Dendritic cell treated with granulocyte-macrophage colony-stimulating factor and Interleukin-4, amounts not matched to agents 40 ng/mL and 50 ng/mL, for 4 days (primary cell): ENCODE measurements at regions of chr9 and their contacts with region 1.

Region 1: DNA sequence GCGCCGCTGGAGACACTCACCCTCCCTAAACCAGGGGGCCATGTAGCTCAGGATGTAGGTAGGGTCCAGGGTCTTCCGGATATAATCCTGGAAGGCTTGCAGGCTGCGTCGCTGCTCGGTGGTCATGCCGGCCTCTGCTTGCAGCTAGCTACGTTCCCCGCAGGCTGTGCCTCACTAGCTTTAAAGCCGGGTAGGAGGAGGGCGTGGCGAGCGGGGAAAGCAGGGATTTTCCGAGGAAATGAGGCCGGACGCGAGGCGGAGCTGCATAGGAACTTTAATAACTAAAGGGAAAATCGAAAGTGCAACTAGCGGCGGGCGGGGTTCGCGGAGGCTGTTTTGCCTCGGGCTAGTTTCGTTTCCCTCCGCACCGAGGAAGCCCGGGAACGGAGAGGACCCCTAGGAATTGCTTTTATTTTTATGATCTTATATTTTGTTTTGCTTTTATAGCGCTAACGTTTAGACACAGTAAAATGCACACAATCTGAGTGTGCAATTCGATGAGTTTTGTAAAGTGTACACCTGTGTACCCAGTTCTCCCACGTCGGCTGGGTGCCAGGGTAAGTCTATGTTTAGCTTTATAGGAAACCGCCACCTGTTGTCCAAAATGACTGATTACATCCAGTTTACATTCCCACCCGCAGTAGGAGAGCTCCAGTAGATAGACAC is at the start of gene RIGI:
- H3K4me3 Mint-ChIP-seq: peak within 1 kb of the TSS; percentile 78
- H3K27ac Mint-ChIP-seq: peak within 1 kb of the TSS; percentile 90
- H3K4me1 Mint-ChIP-seq: peaks cover 25% of the 10 kb centered on the region
- H3K27me3 Mint-ChIP-seq: no peaks in the 10 kb centered on the region

Region 2: GRCh38 chr9:32384364-32385151 is 141.6 kb before region 1 on chr9 and contains the start of gene ACO1:
- intact Hi-C with region 1: loop called (anchors 1 kb)
- H3K4me3 Mint-ChIP-seq: peak within 1 kb of the TSS; percentile 87
- H3K27ac Mint-ChIP-seq: peak within 1 kb of the TSS; percentile 80
- H3K4me1 Mint-ChIP-seq: peaks cover 26% of the 10 kb centered on the region
- H3K27me3 Mint-ChIP-seq: peaks cover 26% of the 10 kb centered on the region

Region 3: GRCh38 chr9:32442433-32442832 is 83.7 kb before region 1 on chr9:
- intact Hi-C with region 1: no loop called
- H3K4me3 Mint-ChIP-seq: no peak overlapping the region
- H3K27ac Mint-ChIP-seq: no peak overlapping the region
- H3K4me1 Mint-ChIP-seq: no peaks in the 10 kb centered on the region
- H3K27me3 Mint-ChIP-seq: no peaks in the 10 kb centered on the region

Region 4: DNA sequence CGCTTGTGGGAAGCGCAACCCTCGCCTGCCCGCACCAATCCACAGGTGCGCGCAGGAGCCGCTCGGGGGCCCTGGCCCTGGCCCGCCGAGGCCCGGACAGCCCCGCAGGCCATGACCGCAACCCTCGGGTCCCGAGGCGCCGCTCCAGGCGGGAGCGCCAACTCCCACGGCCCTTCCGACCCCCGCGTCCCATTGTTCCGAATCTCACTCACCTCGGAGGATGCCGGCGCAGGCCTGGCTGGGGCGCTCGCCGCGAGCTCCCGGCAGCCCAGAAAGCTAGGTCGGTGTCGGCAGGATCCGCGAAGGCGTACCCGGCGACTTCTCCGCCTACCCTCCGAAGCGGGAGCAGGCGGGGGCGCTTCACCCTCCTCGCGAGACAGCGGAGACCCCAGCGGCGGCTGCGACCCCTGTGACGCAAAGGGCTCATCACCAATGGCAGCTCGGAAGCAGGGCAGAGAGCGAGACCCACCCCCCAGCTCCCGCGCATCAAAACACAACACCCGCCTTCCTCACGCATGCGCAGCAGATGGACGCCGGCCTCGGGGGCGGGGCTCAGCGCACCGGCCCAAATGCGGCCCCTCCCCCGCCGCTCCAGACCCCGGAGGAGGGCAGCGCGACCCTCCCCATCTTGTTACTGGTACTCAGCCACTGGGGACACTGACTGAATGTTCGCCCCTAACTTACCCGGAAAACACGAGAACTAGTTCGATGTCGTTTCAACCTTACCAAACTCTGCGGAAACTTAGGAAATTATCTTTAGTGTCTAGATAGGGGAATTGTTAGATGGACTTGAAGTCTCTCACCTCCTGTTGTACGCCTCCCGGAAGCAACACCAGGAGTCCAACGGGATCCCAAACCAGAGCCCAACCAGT is 24.6 kb after region 1 on chr9:
- intact Hi-C with region 1: loop called (anchors 1 kb)
- H3K4me3 Mint-ChIP-seq: peak overlapping the region; percentile 83
- H3K27ac Mint-ChIP-seq: peak overlapping the region; percentile 94
- H3K4me1 Mint-ChIP-seq: peaks cover 32% of the 10 kb centered on the region
- H3K27me3 Mint-ChIP-seq: no peaks in the 10 kb centered on the region

Region 5: DNA sequence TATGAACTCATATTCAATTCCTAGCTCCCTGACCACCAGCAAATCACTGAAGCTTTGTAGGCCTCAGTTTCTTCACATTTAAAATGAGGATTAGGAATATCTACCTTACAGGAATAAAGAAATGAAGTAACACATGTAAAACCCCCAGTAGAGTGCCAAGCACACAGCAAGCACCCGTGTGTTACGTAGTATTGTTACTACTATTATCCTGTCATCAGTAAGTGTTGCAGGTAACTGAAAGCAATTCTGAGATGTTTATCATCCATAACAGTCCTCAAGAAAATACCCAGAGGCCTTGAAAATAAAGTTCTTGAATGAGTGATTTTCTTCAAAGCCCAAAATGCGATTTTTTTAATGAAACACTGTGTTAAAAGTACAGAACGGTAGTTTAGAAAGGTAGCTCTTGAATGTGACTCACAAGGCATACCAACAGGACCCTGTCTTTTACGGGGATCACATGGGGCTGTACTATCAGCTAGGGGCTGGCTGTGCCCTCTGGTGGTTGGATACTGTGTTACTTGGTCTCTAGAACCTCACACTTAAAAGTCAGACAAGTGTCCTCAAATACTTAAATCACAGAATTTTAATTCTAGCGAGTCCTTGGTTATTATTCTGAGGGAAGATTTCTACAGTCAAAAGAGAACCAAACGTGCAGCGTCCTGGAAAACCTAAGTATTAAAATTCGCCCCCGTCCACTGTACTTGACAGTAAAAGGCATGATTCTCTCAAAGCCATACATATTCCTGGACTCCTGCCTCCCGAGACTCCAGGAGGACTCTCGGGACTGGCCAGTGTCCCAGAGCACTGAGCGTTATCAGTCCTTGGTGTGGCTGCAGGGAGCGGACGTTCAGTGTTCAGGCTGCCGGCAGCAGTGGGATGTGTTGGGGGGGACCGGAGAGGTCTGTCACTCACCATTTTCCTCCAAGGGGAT is 46.1 kb after region 1 on chr9:
- intact Hi-C with region 1: loop called (anchors 5 kb)
- H3K4me3 Mint-ChIP-seq: peak overlapping the region; percentile 97
- H3K27ac Mint-ChIP-seq: peak overlapping the region; percentile 92
- H3K4me1 Mint-ChIP-seq: peaks cover 19% of the 10 kb centered on the region
- H3K27me3 Mint-ChIP-seq: peaks cover 2% of the 10 kb centered on the region

Region 6: GRCh38 chr9:32618261-32618660 is 92.1 kb after region 1 on chr9:
- intact Hi-C with region 1: no loop called
- H3K4me3 Mint-ChIP-seq: no peak overlapping the region
- H3K27ac Mint-ChIP-seq: no peak overlapping the region
- H3K4me1 Mint-ChIP-seq: no peaks in the 10 kb centered on the region
- H3K27me3 Mint-ChIP-seq: peaks cover 10% of the 10 kb centered on the region